ENCODE measurements at regions of chr18 and their contacts with region 1.

Region 1: GRCh38 chr18:79378542-79379250 is 17.0 kb upstream of the NFATC1 start:
- DNase-seq: peak; percentile 59
- H3K4me3 Mint-ChIP-seq: no peak overlapping the region
- H3K27ac Mint-ChIP-seq: no peak overlapping the region
- H3K4me1 Mint-ChIP-seq: no peaks in the 10 kb centered on the region
- H3K27me3 Mint-ChIP-seq: no peaks in the 10 kb centered on the region
- CTCF ChIP-seq: peak; percentile 80

Region 2: DNA sequence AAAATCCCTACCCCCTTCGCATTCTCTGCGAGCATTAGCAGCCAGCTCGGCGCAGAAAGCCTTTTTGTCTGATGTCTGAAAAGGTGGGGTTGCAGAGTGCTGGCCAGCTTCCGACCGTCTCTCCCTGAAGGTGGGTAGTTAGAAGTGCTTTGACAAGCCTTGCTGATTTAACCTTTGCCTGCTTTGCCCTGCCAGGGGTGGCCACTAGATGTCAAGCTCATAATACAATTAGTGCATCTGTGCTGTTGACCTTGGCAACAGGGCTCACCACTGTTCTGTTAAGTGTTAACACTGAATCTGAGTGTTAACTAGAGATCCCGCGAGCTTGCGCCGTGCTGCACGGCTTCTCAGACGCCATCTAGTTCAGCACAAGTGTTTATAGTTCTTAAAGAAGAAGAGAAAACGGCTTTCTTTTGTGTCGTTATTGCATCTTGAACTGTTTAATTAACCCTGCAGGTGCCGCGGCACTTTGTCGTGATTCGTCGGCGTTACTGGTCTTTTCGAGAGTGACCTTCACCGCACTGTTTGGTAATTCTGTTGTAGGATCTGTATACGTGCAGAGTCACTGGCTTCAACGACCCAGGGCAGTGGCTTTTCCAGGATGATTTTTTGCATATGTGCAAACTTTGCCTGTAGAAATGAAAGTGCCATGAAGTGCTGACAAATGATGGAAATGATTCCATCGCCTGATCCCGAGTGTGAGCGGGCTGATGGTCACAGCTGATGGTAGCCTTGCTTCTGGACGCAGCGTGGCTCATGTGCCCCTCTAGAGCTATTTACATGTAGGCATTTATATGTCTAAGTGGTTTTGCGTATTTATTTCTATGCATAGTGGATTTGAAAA is 393.5 kb before region 1 on chr18:
- CTCF ChIA-PET with region 1: no interaction called
- POLR2A ChIA-PET with region 1: no interaction called
- intact Hi-C with region 1: loop called (anchors 5 kb)
- DNase-seq: peak; percentile 31
- H3K4me3 Mint-ChIP-seq: no peak overlapping the region
- H3K27ac Mint-ChIP-seq: no peak overlapping the region
- H3K4me1 Mint-ChIP-seq: no peaks in the 10 kb centered on the region
- H3K27me3 Mint-ChIP-seq: no peaks in the 10 kb centered on the region
- CTCF ChIP-seq: peak; percentile 37

Region 3: GRCh38 chr18:79393635-79394533 is 15.2 kb after region 1 on chr18:
- CTCF ChIA-PET with region 1: interaction called, 39 read pairs
- POLR2A ChIA-PET with region 1: no interaction called
- intact Hi-C with region 1: no loop called
- DNase-seq: peak; percentile 69
- H3K4me3 Mint-ChIP-seq: peak overlapping the region; percentile 93
- H3K27ac Mint-ChIP-seq: peak overlapping the region; percentile 100
- H3K4me1 Mint-ChIP-seq: no peaks in the 10 kb centered on the region
- H3K27me3 Mint-ChIP-seq: no peaks in the 10 kb centered on the region
- CTCF ChIP-seq: no peak

Region 4: GRCh38 chr18:79528846-79529245 is 150.2 kb after region 1 on chr18:
- CTCF ChIA-PET with region 1: interaction called, 39 read pairs
- POLR2A ChIA-PET with region 1: no interaction called
- intact Hi-C with region 1: no loop called
- DNase-seq: peak; percentile 46
- H3K4me3 Mint-ChIP-seq: no peak overlapping the region
- H3K27ac Mint-ChIP-seq: no peak overlapping the region
- H3K4me1 Mint-ChIP-seq: no peaks in the 10 kb centered on the region
- H3K27me3 Mint-ChIP-seq: no peaks in the 10 kb centered on the region
- CTCF ChIP-seq: peak; percentile 48

Region 5: DNA sequence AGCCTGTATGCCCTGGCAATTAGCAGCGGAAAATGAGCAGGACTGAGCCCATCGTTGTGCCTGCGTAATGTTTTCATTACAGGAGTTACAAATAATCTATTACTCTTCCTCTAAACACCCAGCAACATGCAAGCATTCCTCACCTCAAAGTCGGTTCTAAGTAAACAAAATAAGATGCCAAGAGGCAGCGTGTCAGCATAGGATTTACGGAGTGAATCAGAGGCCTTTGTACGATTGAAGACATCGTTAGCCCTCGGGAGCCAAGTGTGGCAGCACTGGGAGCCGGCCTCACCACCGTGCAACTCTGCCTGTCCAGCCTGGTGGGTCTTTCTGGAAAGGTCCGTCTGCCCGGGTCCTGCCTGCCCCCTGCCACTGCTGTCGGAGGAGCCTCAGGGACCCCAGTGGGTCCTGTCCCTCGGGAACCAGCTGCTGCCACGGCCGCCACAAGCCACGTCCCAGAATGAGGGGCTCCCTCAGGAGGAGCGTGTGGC is 220.8 kb after region 1 on chr18:
- CTCF ChIA-PET with region 1: no interaction called
- POLR2A ChIA-PET with region 1: no interaction called
- intact Hi-C with region 1: no loop called
- DNase-seq: peak; percentile 49
- H3K4me3 Mint-ChIP-seq: no peak overlapping the region
- H3K27ac Mint-ChIP-seq: no peak overlapping the region
- H3K4me1 Mint-ChIP-seq: no peaks in the 10 kb centered on the region
- H3K27me3 Mint-ChIP-seq: no peaks in the 10 kb centered on the region
- CTCF ChIP-seq: no peak

Region 6: GRCh38 chr18:79644006-79644665 is 265.4 kb after region 1 on chr18:
- CTCF ChIA-PET with region 1: interaction called, 65 read pairs
- POLR2A ChIA-PET with region 1: no interaction called
- intact Hi-C with region 1: loop called (anchors 1 kb)
- DNase-seq: peak; percentile 63
- H3K4me3 Mint-ChIP-seq: no peak overlapping the region
- H3K27ac Mint-ChIP-seq: no peak overlapping the region
- H3K4me1 Mint-ChIP-seq: peaks cover 6% of the 10 kb centered on the region
- H3K27me3 Mint-ChIP-seq: no peaks in the 10 kb centered on the region
- CTCF ChIP-seq: peak; percentile 97

Measured in MCF 10A (cell line).